ENCODE measurements at regions of chr4 and their contacts with region 1.

Region 1: GRCh38 chr4:54683616-54684346 is 26.0 kb downstream of the KIT start:
- DNase-seq: peak; percentile 37
- ATAC-seq: peak; percentile 77
- H3K4me3 ChIP-seq: no peak overlapping the region
- H3K27ac ChIP-seq: no peak overlapping the region
- H3K4me1 ChIP-seq: no peaks in the 10 kb centered on the region
- H3K27me3 ChIP-seq: peaks cover 4% of the 10 kb centered on the region; the same call in 1 of the 2 replicates
- CTCF ChIP-seq: peak; percentile 49 to 72 (median 67); a peak in 5 of 6 replicates
- POLR2A ChIP-seq: no peak
- RAD21 ChIP-seq: peak; percentile 56

Region 2: GRCh38 chr4:54727346-54727745 is 43.6 kb after region 1 on chr4:
- CTCF ChIA-PET with region 1: no interaction called
- POLR2A ChIA-PET with region 1: no interaction called
- RAD21 ChIA-PET with region 1: no interaction called
- intact Hi-C with region 1: no loop called
- DNase-seq: no peak
- ATAC-seq: no peak
- H3K4me3 ChIP-seq: no peak overlapping the region
- H3K27ac ChIP-seq: no peak overlapping the region
- H3K4me1 ChIP-seq: no peaks in the 10 kb centered on the region
- H3K27me3 ChIP-seq: peaks cover 28% of the 10 kb centered on the region; the same call in 1 of the 2 replicates
- CTCF ChIP-seq: no peak
- POLR2A ChIP-seq: no peak
- RAD21 ChIP-seq: no peak

Region 3: GRCh38 chr4:54840992-54841768 is 157.4 kb after region 1 on chr4:
- CTCF ChIA-PET with region 1: no interaction called
- POLR2A ChIA-PET with region 1: no interaction called
- RAD21 ChIA-PET with region 1: no interaction called
- intact Hi-C with region 1: loop called (anchors 2 kb)
- DNase-seq: no peak
- ATAC-seq: no peak; the same call in 1 of the 2 replicates
- H3K4me3 ChIP-seq: no peak overlapping the region
- H3K27ac ChIP-seq: no peak overlapping the region
- H3K4me1 ChIP-seq: no peaks in the 10 kb centered on the region
- H3K27me3 ChIP-seq: no peaks in the 10 kb centered on the region
- CTCF ChIP-seq: no peak; a peak in 1 of 6 replicates
- POLR2A ChIP-seq: no peak
- RAD21 ChIP-seq: peak; percentile 30; the same call in 1 of the 2 replicates

Region 4: GRCh38 chr4:54961357-54961975 is 277.7 kb after region 1 on chr4:
- CTCF ChIA-PET with region 1: interaction called, 17 read pairs
- POLR2A ChIA-PET with region 1: no interaction called
- RAD21 ChIA-PET with region 1: no interaction called
- intact Hi-C with region 1: loop called (anchors 1 kb)
- DNase-seq: peak; percentile 21
- ATAC-seq: peak; percentile 89
- H3K4me3 ChIP-seq: no peak overlapping the region
- H3K27ac ChIP-seq: no peak overlapping the region
- H3K4me1 ChIP-seq: no peaks in the 10 kb centered on the region
- H3K27me3 ChIP-seq: no peaks in the 10 kb centered on the region
- CTCF ChIP-seq: peak; percentile 46 to 70 (median 59); a peak in 5 of 6 replicates
- POLR2A ChIP-seq: no peak
- RAD21 ChIP-seq: peak; percentile 70

Measured in HCT116 (cell line).